Activated B cell treated with CpG ODN at 0.5 μM for 24 hours (primary cell): ENCODE measurements at regions of chr14 and their contacts with region 1.

Region 1: GRCh38 chr14:89303457-89304435 is 113.3 kb downstream of the FOXN3 start:
- DNase-seq: peak; percentile 57
- ATAC-seq: peak; percentile 63
- H3K4me3 Mint-ChIP-seq: peak overlapping the region; percentile 89
- H3K27ac Mint-ChIP-seq: peak overlapping the region; percentile 99
- H3K4me1 Mint-ChIP-seq: peaks cover 77% of the 10 kb centered on the region
- H3K27me3 Mint-ChIP-seq: no peaks in the 10 kb centered on the region
- CTCF ChIP-seq: no peak

Region 2: DNA sequence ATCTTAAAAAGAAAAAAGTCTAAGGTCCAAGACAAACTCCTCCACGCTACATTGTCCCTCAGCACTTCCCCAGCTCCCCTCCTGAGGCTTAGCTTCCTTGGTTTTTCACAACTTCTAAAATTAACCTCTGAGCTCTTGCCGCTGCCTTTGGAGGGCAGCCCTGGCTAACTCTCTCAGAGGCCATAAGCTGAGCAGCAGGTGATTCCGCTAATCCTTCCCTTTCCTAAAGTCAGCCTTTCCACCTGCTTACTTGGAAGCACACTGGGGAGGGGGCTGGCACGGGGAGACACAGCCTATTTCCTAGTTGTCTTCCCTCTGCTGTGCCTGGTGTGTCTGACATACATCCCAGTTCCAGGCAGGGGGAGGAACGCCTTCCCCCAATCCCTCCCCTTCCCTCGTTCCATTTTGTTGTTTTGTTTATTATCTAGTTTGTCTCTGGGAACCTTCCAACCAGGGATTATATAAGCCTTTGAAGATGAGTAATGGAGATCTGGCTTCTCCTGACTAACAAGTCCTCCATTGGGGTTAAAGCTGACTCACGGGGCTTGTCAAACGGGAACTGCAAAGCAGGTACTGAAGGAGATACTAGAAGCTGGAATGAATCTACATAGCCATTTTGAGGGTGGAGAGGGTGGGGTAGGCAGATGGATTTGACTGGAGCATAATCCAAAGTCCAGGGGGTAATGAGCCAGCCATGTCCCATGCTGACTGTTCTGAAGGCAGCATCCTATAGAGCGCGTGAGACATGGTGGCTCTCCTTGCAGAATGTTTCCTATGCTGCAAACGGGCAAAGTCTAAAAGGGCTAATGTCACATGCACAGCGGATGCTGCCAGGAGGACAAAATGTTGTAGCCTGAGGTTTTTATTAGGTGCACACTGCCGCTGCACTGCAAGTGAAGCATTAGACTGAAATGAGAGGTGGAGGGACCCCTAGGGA is 117.6 kb before region 1 on chr14:
- CTCF ChIA-PET with region 1: no interaction called
- POLR2A ChIA-PET with region 1: interaction called, 12 read pairs
- intact Hi-C with region 1: loop called (anchors 1 kb)
- DNase-seq: no peak
- ATAC-seq: no peak
- H3K4me3 Mint-ChIP-seq: peak overlapping the region; percentile 69
- H3K27ac Mint-ChIP-seq: peak overlapping the region; percentile 91
- H3K4me1 Mint-ChIP-seq: peaks cover 41% of the 10 kb centered on the region
- H3K27me3 Mint-ChIP-seq: no peaks in the 10 kb centered on the region
- CTCF ChIP-seq: no peak

Region 3: GRCh38 chr14:89330236-89331002 is 26.7 kb after region 1 on chr14:
- CTCF ChIA-PET with region 1: interaction called, 30 read pairs
- POLR2A ChIA-PET with region 1: interaction called, 8 read pairs
- intact Hi-C with region 1: loop called (anchors 1 kb)
- DNase-seq: no peak
- ATAC-seq: no peak
- H3K4me3 Mint-ChIP-seq: peak overlapping the region; percentile 5
- H3K27ac Mint-ChIP-seq: peak overlapping the region; percentile 79
- H3K4me1 Mint-ChIP-seq: peaks cover 60% of the 10 kb centered on the region
- H3K27me3 Mint-ChIP-seq: no peaks in the 10 kb centered on the region
- CTCF ChIP-seq: no peak

Region 4: DNA sequence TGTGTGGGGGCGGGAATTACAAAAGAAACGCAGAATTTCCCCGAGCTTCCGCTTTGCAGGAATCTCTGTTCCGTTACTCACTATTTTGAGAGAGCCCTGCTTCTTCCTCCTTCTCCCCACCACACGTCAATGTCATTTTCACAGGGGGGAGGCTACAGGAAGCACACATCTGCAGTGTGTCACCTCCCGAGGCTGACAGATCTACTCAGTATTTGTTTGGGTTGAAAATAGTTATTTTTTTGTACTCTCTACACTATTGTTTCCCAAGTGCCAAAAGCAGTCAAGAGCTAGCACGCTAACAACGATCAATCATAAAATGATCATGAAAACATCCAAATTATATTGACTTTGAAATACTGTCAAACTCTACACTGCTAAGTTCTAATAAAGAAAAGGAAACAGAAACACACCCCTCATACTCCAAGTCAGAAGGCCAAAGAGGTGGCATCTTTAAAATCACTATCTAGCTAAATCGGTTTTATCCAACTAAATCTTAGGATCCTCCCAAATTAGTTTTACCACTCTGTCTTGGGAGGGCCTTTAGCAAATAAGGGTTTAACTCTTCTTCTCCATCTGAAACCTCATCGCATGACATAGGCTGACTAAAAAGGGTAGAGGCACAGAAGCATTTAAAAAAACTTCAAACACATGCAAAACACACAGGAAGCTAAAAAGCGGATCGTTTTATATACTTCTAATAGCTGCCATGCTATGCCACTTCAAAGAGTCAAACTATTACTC is 61.5 kb after region 1 on chr14:
- CTCF ChIA-PET with region 1: no interaction called
- POLR2A ChIA-PET with region 1: interaction called, 28 read pairs
- intact Hi-C with region 1: loop called (anchors 1 kb)
- DNase-seq: peak; percentile 43
- ATAC-seq: peak; percentile 93
- H3K4me3 Mint-ChIP-seq: peak overlapping the region; percentile 80
- H3K27ac Mint-ChIP-seq: peak overlapping the region; percentile 94
- H3K4me1 Mint-ChIP-seq: peaks cover 67% of the 10 kb centered on the region
- H3K27me3 Mint-ChIP-seq: no peaks in the 10 kb centered on the region
- CTCF ChIP-seq: no peak

Region 5: GRCh38 chr14:89509891-89510290 is 206.1 kb after region 1 on chr14:
- CTCF ChIA-PET with region 1: no interaction called
- POLR2A ChIA-PET with region 1: no interaction called
- intact Hi-C with region 1: loop called (anchors 1 kb)
- DNase-seq: no peak
- ATAC-seq: no peak
- H3K4me3 Mint-ChIP-seq: peak overlapping the region; percentile 81
- H3K27ac Mint-ChIP-seq: peak overlapping the region; percentile 93
- H3K4me1 Mint-ChIP-seq: peaks cover 42% of the 10 kb centered on the region
- H3K27me3 Mint-ChIP-seq: no peaks in the 10 kb centered on the region
- CTCF ChIP-seq: no peak

Region 6: GRCh38 chr14:90213099-90213748 is 909.5 kb after region 1 on chr14:
- CTCF ChIA-PET with region 1: no interaction called
- POLR2A ChIA-PET with region 1: no interaction called
- intact Hi-C with region 1: no loop called
- DNase-seq: no peak
- ATAC-seq: no peak
- H3K4me3 Mint-ChIP-seq: no peak overlapping the region
- H3K27ac Mint-ChIP-seq: no peak overlapping the region
- H3K4me1 Mint-ChIP-seq: no peaks in the 10 kb centered on the region
- H3K27me3 Mint-ChIP-seq: peaks cover 6% of the 10 kb centered on the region
- CTCF ChIP-seq: no peak

Region 7: GRCh38 chr14:90256354-90257131 is 952.8 kb after region 1 on chr14 and contains the start of gene PSMC1:
- CTCF ChIA-PET with region 1: no interaction called
- POLR2A ChIA-PET with region 1: no interaction called
- intact Hi-C with region 1: loop called (anchors 10 kb)
- DNase-seq: peak; percentile 76
- ATAC-seq: peak; percentile 94
- H3K4me3 Mint-ChIP-seq: peak within 1 kb of the TSS; percentile 98
- H3K27ac Mint-ChIP-seq: peak within 1 kb of the TSS; percentile 92
- H3K4me1 Mint-ChIP-seq: peaks cover 40% of the 10 kb centered on the region
- H3K27me3 Mint-ChIP-seq: no peaks in the 10 kb centered on the region
- CTCF ChIP-seq: no peak
- total RNA-seq, gene PSMC1: 101 and 102 TPM in 2 replicates